K562 (cell line): ENCODE measurements at regions of chr12 and their contacts with region 1.

Region 1: GRCh38 chr12:56237552-56237951 is 7.7 kb downstream of the SLC39A5 start:
- DNase-seq: no peak
- ATAC-seq: no peak
- H3K4me3 ChIP-seq: no peak overlapping the region
- H3K27ac ChIP-seq: no peak overlapping the region
- H3K4me1 ChIP-seq: peaks cover 16 to 28% of the 10 kb centered on the region in 2 experiments
- H3K27me3 ChIP-seq: no peaks in the 10 kb centered on the region
- CTCF ChIP-seq: no peak
- EP300 ChIP-seq: no peak
- POLR2A ChIP-seq: no peak
- RAD21 ChIP-seq: no peak

Region 2: GRCh38 chr12:56248688-56249087 is 11.1 kb after region 1 on chr12:
- CTCF ChIA-PET with region 1: interaction called, 4 read pairs
- POLR2A ChIA-PET with region 1: interaction called, 12 read pairs
- in situ Hi-C with region 1: no loop called
- intact Hi-C with region 1: no loop called
- DNase-seq: no peak
- ATAC-seq: no peak
- H3K4me3 ChIP-seq: no peak overlapping the region
- H3K27ac ChIP-seq: no peak overlapping the region
- H3K4me1 ChIP-seq: peaks cover 9 to 19% of the 10 kb centered on the region in 2 experiments; a peak in 4 of 5 replicates
- H3K27me3 ChIP-seq: no peaks in the 10 kb centered on the region
- CTCF ChIP-seq: no peak
- EP300 ChIP-seq: no peak
- POLR2A ChIP-seq: no peak
- RAD21 ChIP-seq: no peak

Region 3: DNA sequence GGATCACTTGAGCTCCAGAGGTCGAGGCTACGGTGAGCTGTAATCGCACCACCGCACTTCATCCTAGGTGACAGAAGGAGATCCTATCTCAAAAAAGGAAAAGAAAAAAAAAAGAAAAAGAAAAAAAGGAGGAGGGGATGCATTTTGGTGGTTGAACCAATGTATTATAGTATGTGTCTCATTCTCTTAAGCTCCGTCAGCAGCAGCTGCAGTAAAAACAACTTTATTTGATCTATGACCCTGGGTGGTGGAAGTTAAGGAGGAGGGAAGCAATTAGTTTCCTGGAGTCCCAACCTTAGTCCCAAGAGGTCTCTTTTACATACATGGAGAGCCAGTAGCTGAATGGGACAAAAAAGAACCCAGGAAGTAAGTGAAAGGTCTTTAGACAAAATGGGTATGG is 151.9 kb after region 1 on chr12:
- CTCF ChIA-PET with region 1: no interaction called
- POLR2A ChIA-PET with region 1: no interaction called
- in situ Hi-C with region 1: no loop called
- intact Hi-C with region 1: no loop called
- DNase-seq: no peak
- ATAC-seq: no peak; the same call in 2 of the 3 replicates
- H3K4me3 ChIP-seq: no peak overlapping the region
- H3K27ac ChIP-seq: no peak overlapping the region
- H3K4me1 ChIP-seq: peaks cover 14 to 18% of the 10 kb centered on the region in 2 experiments
- H3K27me3 ChIP-seq: no peaks in the 10 kb centered on the region
- CTCF ChIP-seq: no peak
- EP300 ChIP-seq: no peak
- POLR2A ChIP-seq: no peak
- RAD21 ChIP-seq: no peak

Region 4: DNA sequence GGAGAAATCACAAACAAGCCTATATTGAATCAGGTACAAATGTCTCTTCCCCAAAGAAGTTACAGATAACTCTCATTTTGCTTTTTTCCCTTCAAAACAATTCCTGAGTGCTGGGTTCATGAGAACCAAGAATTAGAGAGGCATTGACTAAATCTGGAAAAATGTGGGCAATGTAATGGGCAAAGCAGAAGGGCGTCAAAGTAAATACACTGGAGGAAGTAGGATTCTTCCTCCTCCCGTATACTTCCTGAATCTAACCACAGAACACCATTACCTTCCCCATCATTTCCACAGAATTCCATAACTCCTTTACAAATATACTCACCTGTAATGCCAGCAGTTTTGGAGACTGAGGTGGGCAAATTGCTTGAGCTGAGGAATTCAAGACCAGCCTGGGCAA is 281.0 kb after region 1 on chr12:
- CTCF ChIA-PET with region 1: no interaction called
- POLR2A ChIA-PET with region 1: no interaction called
- in situ Hi-C with region 1: no loop called
- intact Hi-C with region 1: no loop called
- DNase-seq: no peak
- ATAC-seq: no peak
- H3K4me3 ChIP-seq: no peak overlapping the region
- H3K27ac ChIP-seq: no peak overlapping the region
- H3K4me1 ChIP-seq: peaks cover 3 to 7% of the 10 kb centered on the region in 2 experiments; a peak in 1 of 5 replicates
- H3K27me3 ChIP-seq: no peaks in the 10 kb centered on the region
- CTCF ChIP-seq: no peak
- EP300 ChIP-seq: no peak
- POLR2A ChIP-seq: no peak
- RAD21 ChIP-seq: no peak

Region 5: GRCh38 chr12:56546680-56547079 is 309.1 kb after region 1 on chr12:
- CTCF ChIA-PET with region 1: no interaction called
- POLR2A ChIA-PET with region 1: no interaction called
- in situ Hi-C with region 1: no loop called
- intact Hi-C with region 1: no loop called
- DNase-seq: no peak
- ATAC-seq: no peak
- H3K4me3 ChIP-seq: no peak overlapping the region
- H3K27ac ChIP-seq: no peak overlapping the region
- H3K4me1 ChIP-seq: no peaks in the 10 kb centered on the region
- H3K27me3 ChIP-seq: peaks cover 13 to 15% of the 10 kb centered on the region in 2 experiments; a peak in 4 of 5 replicates
- CTCF ChIP-seq: no peak
- EP300 ChIP-seq: no peak
- POLR2A ChIP-seq: no peak
- RAD21 ChIP-seq: no peak